Breast epithelium (tissue), 4 donors: ENCODE measurements at regions of chr2 and their contacts with region 1.

Region 1: GRCh38 chr2:217370391-217370790 is 510.5 kb upstream of the TNP1 start:
- DNase-seq: no peak
- H3K4me3 ChIP-seq: no peak overlapping the region
- H3K27ac ChIP-seq: no peak overlapping the region
- H3K4me1 ChIP-seq: peaks cover 0 to 5% of the 10 kb centered on the region in 2 donors
- H3K27me3 ChIP-seq: no peaks in the 10 kb centered on the region
- CTCF ChIP-seq: no peak
- POLR2A ChIP-seq: no peak

Region 2: DNA sequence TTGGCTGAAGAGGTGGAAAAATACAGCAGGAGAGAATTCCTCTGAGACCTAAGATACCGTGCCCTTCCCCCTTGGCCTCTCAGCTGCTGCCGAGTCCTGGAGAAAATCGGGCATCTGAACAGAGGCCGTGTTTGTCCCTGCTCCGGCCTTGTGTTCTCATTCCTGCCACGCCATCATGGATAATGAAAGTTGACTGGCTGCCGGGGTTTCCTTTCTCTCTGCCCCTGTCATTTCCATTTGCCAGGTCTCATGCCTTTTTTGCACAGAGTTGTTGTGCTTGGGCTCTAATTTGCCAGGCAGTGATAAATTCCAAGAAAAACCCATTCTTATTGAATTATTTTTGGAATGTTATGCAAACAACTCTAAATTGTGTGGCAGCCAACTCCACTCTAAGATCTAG is 13.6 kb before region 1 on chr2:
- intact Hi-C with region 1: loop called (anchors 1 kb)
- DNase-seq: peak in 1 of 2 donors; percentile 48
- H3K4me3 ChIP-seq: peak overlapping the region in 1 of 3 donors; percentile 13
- H3K27ac ChIP-seq: peak overlapping the region; percentile 65 to 66
- H3K4me1 ChIP-seq: peaks cover 0 to 4% of the 10 kb centered on the region in 2 donors
- H3K27me3 ChIP-seq: no peaks in the 10 kb centered on the region
- CTCF ChIP-seq: no peak
- POLR2A ChIP-seq: no peak